PC-3 (cell line): ENCODE measurements at regions of chr10 and their contacts with region 1.

Region 1: DNA sequence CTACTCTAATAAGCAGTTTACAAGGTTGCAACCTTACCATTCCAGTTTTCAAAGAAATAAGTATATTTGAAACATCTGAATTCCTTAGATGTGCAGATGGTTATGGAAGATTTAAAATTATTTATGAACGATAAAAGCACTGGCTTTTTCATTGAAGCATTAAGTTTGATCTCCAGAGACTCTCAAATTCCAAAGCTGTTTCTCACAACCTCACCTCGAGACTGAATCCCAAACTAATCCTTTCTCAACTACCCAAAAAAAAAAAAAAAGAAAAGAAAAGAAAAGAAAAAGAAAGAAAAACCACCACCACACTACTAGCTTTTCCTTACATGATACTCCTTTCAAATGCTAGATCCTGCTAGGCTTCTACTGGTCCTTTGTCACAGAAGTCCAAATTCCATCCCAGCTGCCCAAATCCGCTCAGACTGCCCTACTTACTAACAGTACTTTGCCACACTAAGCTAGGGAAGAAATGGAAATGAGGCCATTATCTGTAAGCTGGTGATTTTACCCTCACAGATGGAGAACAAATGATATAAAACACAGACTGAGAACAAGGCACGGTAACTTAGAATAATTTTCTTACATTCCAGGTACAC is 100.6 kb upstream of the CDK1 start:
- DNase-seq: no peak
- ATAC-seq: no peak
- H3K4me3 ChIP-seq: no peak overlapping the region
- H3K27ac ChIP-seq: no peak overlapping the region
- H3K4me1 ChIP-seq: no peaks in the 10 kb centered on the region; the same call in 1 of the 2 replicates
- H3K27me3 ChIP-seq: no peaks in the 10 kb centered on the region
- CTCF ChIP-seq: no peak

Region 2: DNA sequence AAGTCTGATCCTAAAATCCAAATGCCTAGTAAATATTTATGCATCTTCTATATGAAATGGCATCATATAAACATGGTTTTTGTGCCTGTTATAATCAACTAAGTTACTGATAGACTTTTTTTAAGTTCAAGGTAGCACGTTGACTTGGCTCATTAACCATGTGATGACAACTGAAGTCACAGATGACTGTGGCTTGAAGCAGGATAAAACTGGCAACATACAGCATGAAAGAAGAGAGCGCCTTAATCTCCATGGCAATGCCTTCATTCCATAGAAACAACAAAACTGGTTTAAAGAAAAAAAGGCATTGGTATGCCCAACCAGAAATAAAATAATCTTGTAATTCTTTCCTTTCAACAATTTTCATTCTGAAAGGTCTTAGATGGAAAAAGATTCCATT is 88.3 kb before region 1 on chr10:
- CTCF ChIA-PET with region 1: no interaction called
- POLR2A ChIA-PET with region 1: no interaction called
- intact Hi-C with region 1: no loop called
- DNase-seq: no peak
- ATAC-seq: no peak
- H3K4me3 ChIP-seq: no peak overlapping the region
- H3K27ac ChIP-seq: no peak overlapping the region
- H3K4me1 ChIP-seq: 0 out of 2 replicates have a peak, but pooled peaks cover under 1% of the 10 kb centered on the region
- H3K27me3 ChIP-seq: no peaks in the 10 kb centered on the region
- CTCF ChIP-seq: no peak

Region 3: GRCh38 chr10:60663839-60664238 is 13.8 kb before region 1 on chr10:
- CTCF ChIA-PET with region 1: no interaction called
- POLR2A ChIA-PET with region 1: no interaction called
- intact Hi-C with region 1: loop called (anchors 1 kb)
- DNase-seq: no peak
- ATAC-seq: no peak
- H3K4me3 ChIP-seq: no peak overlapping the region
- H3K27ac ChIP-seq: no peak overlapping the region
- H3K4me1 ChIP-seq: peaks cover 40% of the 10 kb centered on the region
- H3K27me3 ChIP-seq: no peaks in the 10 kb centered on the region
- CTCF ChIP-seq: no peak